BJ (cell line): ENCODE measurements at regions of chr3 and their contacts with region 1.

Region 1: DNA sequence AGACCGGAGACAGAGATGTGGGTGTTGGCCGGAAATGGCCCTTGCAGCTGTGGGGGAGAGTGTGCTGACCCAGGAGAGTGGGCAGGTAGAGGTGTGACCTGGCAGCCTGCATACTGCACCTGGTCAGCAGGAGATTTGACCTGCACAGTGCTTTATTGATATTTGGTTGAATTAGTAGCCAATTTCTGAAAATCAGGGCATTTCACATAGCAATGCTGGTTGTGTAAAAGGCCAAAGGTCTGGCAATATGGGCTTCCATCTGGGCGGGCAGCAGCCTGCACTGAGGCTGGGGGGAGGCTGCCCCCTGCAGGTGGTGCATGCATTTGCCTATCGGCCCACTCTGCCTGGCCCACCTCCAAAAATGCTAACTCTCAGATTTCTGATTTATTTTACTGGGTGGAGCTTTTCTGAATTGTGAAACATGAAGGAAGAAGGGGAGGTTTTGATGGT is 9.4 kb upstream of the MGLL start:
- DNase-seq: no peak
- H3K4me3 ChIP-seq: no peak overlapping the region
- H3K27me3 ChIP-seq: no peaks in the 10 kb centered on the region
- CTCF ChIP-seq: peak; percentile 72

Region 2: DNA sequence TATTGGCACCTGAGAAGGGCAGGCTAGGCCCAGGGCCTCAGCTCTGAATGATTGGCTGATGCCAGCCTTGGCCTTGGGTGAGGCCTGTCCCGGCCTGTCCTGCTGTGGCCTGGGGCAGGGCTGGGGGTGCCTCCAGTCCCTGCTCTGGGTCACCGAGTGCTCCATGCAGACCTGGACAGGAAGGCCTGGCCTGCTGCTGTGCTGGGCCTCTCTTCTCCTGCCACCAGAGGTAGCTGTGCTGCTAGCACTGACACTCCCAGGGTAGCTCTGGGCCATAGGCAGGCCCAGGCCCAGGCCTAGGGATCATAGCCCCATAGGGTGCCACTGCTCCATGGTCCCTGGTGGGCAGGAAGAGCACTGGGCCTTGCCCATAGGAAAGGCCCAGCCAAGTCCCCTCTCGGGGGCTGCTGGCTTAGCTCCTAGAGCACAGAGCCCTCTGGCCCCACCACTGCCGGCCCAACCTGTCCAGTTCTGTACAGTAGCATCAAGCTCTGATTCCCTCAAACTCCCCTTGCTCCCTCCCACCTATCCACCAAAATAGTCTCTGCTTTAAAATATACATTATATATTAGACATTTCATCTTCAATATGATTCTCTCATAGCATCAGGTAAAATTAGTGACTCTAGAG is 140.8 kb before region 1 on chr3:
- CTCF ChIA-PET with region 1: interaction called, 13 read pairs
- POLR2A ChIA-PET with region 1: no interaction called
- DNase-seq: no peak
- H3K4me3 ChIP-seq: no peak overlapping the region
- H3K27me3 ChIP-seq: no peaks in the 10 kb centered on the region
- CTCF ChIP-seq: peak; percentile 91

Region 3: DNA sequence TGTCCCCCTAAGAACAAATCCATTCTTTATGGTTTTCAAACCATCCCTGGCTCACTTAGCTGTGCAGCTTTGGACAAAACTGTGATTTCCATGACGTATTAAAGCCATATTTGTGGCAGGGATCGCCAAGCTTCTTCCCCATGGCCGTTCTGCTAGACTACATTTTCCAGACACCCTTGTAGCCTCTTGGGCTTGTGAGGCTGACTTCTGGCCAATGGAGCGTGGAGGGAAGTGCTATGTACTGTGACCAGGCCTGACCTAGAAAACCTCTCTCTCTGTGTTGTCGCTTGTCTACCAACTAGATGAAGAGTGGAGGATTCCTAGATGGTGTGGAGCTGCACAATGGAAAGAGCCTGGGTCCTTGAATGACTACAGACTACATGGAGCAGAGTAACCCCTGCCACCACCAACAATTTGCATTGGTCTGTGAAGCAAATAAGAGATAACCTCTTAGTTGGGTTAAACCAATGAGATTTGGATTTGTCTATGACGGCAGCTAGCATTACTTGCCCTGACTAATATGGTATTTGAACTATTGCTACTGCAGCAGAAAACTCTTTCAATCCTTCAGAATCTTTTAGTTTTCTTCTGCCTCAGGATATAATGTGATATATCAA is 12.7 kb after region 1 on chr3:
- CTCF ChIA-PET with region 1: interaction called, 19 read pairs
- POLR2A ChIA-PET with region 1: no interaction called
- DNase-seq: no peak
- H3K4me3 ChIP-seq: no peak overlapping the region
- H3K27me3 ChIP-seq: peaks cover 5% of the 10 kb centered on the region
- CTCF ChIP-seq: no peak